Aorta (tissue), 5 donors: ENCODE measurements at regions of chr6 and their contacts with region 1.

Region 1: GRCh38 chr6:33788694-33789549 is at the start of gene LEMD2:
- DNase-seq: peak; percentile 96 to 98
- ATAC-seq: peak; percentile 97
- H3K4me3 ChIP-seq: peak within 1 kb of the TSS; percentile 75 to 91
- H3K27ac ChIP-seq: peak within 1 kb of the TSS; percentile 58 to 72
- H3K4me1 ChIP-seq: peaks cover 0 to 6% of the 10 kb centered on the region in 2 donors
- H3K27me3 ChIP-seq: no peaks in the 10 kb centered on the region
- total RNA-seq, gene LEMD2: 46.6 to 59.8 TPM

Region 2: GRCh38 chr6:33711140-33712129 is 77.5 kb before region 1 on chr6 and contains the start of gene UQCC2:
- intact Hi-C with region 1: loop called in 1 of 2 experiments (anchors 5 kb)
- DNase-seq: peak; percentile 99
- ATAC-seq: peak; percentile 99
- H3K4me3 ChIP-seq: peak within 1 kb of the TSS; percentile 71 to 86
- H3K27ac ChIP-seq: peak within 1 kb of the TSS in 1 of 2 donors; percentile 78
- H3K4me1 ChIP-seq: no peaks in the 10 kb centered on the region
- H3K27me3 ChIP-seq: no peaks in the 10 kb centered on the region
- total RNA-seq, gene UQCC2: 19.5 to 24.0 TPM